ENCODE measurements at regions of chr2 and their contacts with region 1.

Region 1: GRCh38 chr2:183229386-183229785 is 105.1 kb downstream of the NUP35 start:
- DNase-seq: no peak
- ATAC-seq: no peak
- H3K4me3 ChIP-seq: no peak overlapping the region
- H3K4me3 Mint-ChIP-seq: no peak overlapping the region
- H3K27ac ChIP-seq: no peak overlapping the region
- H3K27ac Mint-ChIP-seq: no peak overlapping the region
- H3K4me1 ChIP-seq: no peaks in the 10 kb centered on the region
- H3K4me1 Mint-ChIP-seq: no peaks in the 10 kb centered on the region
- H3K27me3 ChIP-seq: no peaks in the 10 kb centered on the region
- H3K27me3 Mint-ChIP-seq: no peaks in the 10 kb centered on the region
- CTCF ChIP-seq: no peak

Region 2: DNA sequence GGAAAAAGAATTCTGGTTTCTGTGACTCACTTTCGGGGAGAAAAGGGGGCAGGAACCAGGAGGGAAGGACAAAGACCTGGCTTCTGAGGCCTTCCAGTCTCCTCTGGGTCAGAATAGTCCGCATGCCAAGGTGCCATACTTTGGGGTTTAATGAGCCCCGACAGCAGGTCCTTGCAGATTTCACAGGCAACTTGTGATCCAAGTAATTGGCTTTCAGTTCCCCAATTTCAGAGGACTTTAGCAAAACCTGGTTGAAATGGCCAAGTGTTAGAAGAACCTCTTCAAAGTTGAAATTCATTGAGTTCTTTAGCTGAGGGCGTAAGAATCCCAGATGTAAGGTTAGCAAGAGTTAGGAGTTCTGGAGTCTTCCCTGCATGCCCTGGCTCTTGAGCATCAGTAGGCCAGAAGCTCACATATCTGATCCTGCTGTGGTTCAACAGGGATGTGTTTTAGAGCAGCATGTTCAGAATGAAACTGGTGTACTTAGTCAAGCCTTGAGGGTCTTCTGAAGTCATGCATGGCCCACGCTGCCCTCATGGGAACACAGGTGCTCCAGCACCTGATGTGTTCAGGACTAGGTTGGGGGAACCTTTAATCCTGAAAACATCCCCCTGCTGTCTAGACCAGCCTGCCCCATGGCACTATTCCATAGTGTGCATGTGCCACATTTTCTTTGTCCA is 37.9 kb after region 1 on chr2:
- CTCF ChIA-PET with region 1: no interaction called
- POLR2A ChIA-PET with region 1: no interaction called
- intact Hi-C with region 1: loop called in 1 of 2 experiments (anchors 1 kb)
- DNase-seq: no peak
- ATAC-seq: no peak
- H3K4me3 ChIP-seq: no peak overlapping the region
- H3K4me3 Mint-ChIP-seq: no peak overlapping the region
- H3K27ac ChIP-seq: no peak overlapping the region
- H3K27ac Mint-ChIP-seq: no peak overlapping the region
- H3K4me1 ChIP-seq: no peaks in the 10 kb centered on the region
- H3K4me1 Mint-ChIP-seq: no peaks in the 10 kb centered on the region
- H3K27me3 ChIP-seq: no peaks in the 10 kb centered on the region
- H3K27me3 Mint-ChIP-seq: no peaks in the 10 kb centered on the region
- CTCF ChIP-seq: no peak